Caco-2 (cell line): ENCODE measurements at regions of chr16 and their contacts with region 1.

Region 1: GRCh38 chr16:27154705-27155521 is 48.4 kb upstream of the KDM8 start:
- DNase-seq: peak; percentile 38 to 61
- H3K4me3 ChIP-seq: no peak overlapping the region
- H3K4me3 Mint-ChIP-seq: no peak overlapping the region
- H3K27ac Mint-ChIP-seq: no peak overlapping the region
- H3K4me1 ChIP-seq: no peaks in the 10 kb centered on the region
- H3K4me1 Mint-ChIP-seq: peaks cover 5% of the 10 kb centered on the region
- H3K27me3 ChIP-seq: no peaks in the 10 kb centered on the region
- H3K27me3 Mint-ChIP-seq: no peaks in the 10 kb centered on the region
- CTCF ChIP-seq: peak; percentile 89 to 95

Region 2: GRCh38 chr16:27179500-27180072 is 24.7 kb after region 1 on chr16:
- CTCF ChIA-PET with region 1: no interaction called
- POLR2A ChIA-PET with region 1: no interaction called
- intact Hi-C with region 1: no loop called
- DNase-seq: peak; percentile 52 to 57
- H3K4me3 ChIP-seq: no peak overlapping the region
- H3K4me3 Mint-ChIP-seq: no peak overlapping the region
- H3K27ac Mint-ChIP-seq: no peak overlapping the region
- H3K4me1 ChIP-seq: peaks cover 5% of the 10 kb centered on the region
- H3K4me1 Mint-ChIP-seq: peaks cover 5% of the 10 kb centered on the region
- H3K27me3 ChIP-seq: no peaks in the 10 kb centered on the region
- H3K27me3 Mint-ChIP-seq: peaks cover 10% of the 10 kb centered on the region
- CTCF ChIP-seq: peak; percentile 57 to 60

Region 3: GRCh38 chr16:27217256-27217655 is 62.3 kb after region 1 on chr16:
- CTCF ChIA-PET with region 1: no interaction called
- POLR2A ChIA-PET with region 1: no interaction called
- intact Hi-C with region 1: loop called (anchors 10 kb)
- DNase-seq: no peak
- H3K4me3 ChIP-seq: no peak overlapping the region
- H3K4me3 Mint-ChIP-seq: no peak overlapping the region
- H3K27ac Mint-ChIP-seq: no peak overlapping the region
- H3K4me1 ChIP-seq: no peaks in the 10 kb centered on the region
- H3K4me1 Mint-ChIP-seq: no peaks in the 10 kb centered on the region
- H3K27me3 ChIP-seq: no peaks in the 10 kb centered on the region
- H3K27me3 Mint-ChIP-seq: no peaks in the 10 kb centered on the region
- CTCF ChIP-seq: no peak

Region 4: GRCh38 chr16:27455700-27456099 is 300.8 kb after region 1 on chr16:
- CTCF ChIA-PET with region 1: no interaction called
- POLR2A ChIA-PET with region 1: no interaction called
- intact Hi-C with region 1: loop called (anchors 2 kb)
- DNase-seq: no peak
- H3K4me3 ChIP-seq: no peak overlapping the region
- H3K4me3 Mint-ChIP-seq: no peak overlapping the region
- H3K27ac Mint-ChIP-seq: no peak overlapping the region
- H3K4me1 ChIP-seq: no peaks in the 10 kb centered on the region
- H3K4me1 Mint-ChIP-seq: no peaks in the 10 kb centered on the region
- H3K27me3 ChIP-seq: no peaks in the 10 kb centered on the region
- H3K27me3 Mint-ChIP-seq: no peaks in the 10 kb centered on the region
- CTCF ChIP-seq: no peak